ENCODE measurements at regions of chr1 and their contacts with region 1.

Region 1: GRCh38 chr1:171485375-171486047 is at the start of gene PRRC2C:
- DNase-seq: peak; percentile 80 to 95 (median 94)
- ATAC-seq: peak; percentile 93
- H3K4me3 ChIP-seq: peak within 1 kb of the TSS; percentile 93
- H3K4me3 Mint-ChIP-seq: peak within 1 kb of the TSS; percentile 83 to 99 (median 96)
- H3K27ac ChIP-seq: peak within 1 kb of the TSS; percentile 99
- H3K27ac Mint-ChIP-seq: peak within 1 kb of the TSS; percentile 92 to 100 (median 97)
- H3K4me1 ChIP-seq: peaks cover 34 to 46% of the 10 kb centered on the region in 2 donors
- H3K4me1 Mint-ChIP-seq: peaks cover 39 to 54% (median 49%) of the 10 kb centered on the region in 7 donors
- H3K27me3 ChIP-seq: no peaks in the 10 kb centered on the region
- H3K27me3 Mint-ChIP-seq: no peaks in the 10 kb centered on the region
- total RNA-seq, gene PRRC2C: 256 to 341 (median 293) TPM

Region 2: DNA sequence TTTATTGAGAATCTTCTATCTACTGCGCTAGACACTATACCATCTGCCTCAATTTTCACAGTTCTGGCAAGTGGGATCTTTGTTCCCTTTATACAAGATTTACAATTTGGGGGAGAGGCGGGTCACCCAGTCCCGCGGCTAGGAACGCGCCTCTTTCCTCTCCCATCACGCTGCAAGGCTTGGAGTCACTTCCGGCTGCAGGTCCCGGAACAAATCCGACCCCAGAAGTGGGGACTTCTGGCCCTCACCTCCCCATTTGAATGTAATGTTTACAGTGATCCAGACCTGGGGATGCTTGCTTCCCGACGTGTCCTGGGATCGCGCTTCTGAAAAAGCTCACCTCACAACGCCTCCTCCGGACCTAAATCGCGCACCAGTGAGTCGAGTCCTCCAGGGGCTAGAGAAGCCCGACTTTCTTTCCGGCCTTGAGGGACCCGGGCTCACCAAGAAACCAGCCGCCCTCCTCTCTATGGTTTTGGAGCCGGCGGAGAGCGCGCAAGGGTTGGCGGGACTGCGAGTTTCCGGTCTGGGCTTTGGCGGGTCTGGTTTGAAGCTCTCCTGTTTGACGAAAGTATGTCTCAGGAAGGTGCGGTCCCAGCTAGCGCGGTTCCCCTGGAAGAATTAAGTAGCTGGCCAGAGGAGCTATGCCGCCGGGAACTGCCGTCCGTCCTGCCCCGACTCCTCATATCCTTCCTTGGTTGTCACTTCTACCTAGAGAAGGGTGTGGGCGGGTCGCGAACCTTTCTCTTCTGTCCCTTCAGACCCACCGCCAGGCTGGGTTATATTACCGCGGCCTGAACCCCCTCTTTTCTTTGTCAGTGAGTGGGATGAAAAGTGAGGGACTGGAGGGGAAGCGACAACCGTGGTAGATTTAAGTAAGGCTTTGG is 1690.7 kb before region 1 on chr1 and contains the start of gene METTL18:
- CTCF ChIA-PET with region 1: no interaction called
- POLR2A ChIA-PET with region 1: no interaction called
- intact Hi-C with region 1: loop called in 1 of 2 experiments (anchors 1 kb)
- DNase-seq: peak; percentile 72 to 96 (median 92)
- ATAC-seq: peak; percentile 100
- H3K4me3 ChIP-seq: peak within 1 kb of the TSS; percentile 98
- H3K4me3 Mint-ChIP-seq: peak within 1 kb of the TSS; percentile 90 to 100 (median 100)
- H3K27ac ChIP-seq: peak within 1 kb of the TSS; percentile 94
- H3K27ac Mint-ChIP-seq: peak within 1 kb of the TSS; percentile 97 to 100 (median 99)
- H3K4me1 ChIP-seq: peaks cover 10 to 28% of the 10 kb centered on the region in 2 donors
- H3K4me1 Mint-ChIP-seq: peaks cover 26 to 60% (median 56%) of the 10 kb centered on the region in 7 donors
- H3K27me3 ChIP-seq: no peaks in the 10 kb centered on the region
- H3K27me3 Mint-ChIP-seq: no peaks in the 10 kb centered on the region
- total RNA-seq, gene METTL18: 4.9 to 21.1 (median 13.4) TPM

Region 3: GRCh38 chr1:171245458-171246064 is 239.9 kb before region 1 on chr1:
- CTCF ChIA-PET with region 1: no interaction called
- POLR2A ChIA-PET with region 1: no interaction called
- intact Hi-C with region 1: loop called in 1 of 2 experiments (anchors 5 kb)
- DNase-seq: peak in 4 of 9 donors; percentile 8 to 25 (median 15)
- ATAC-seq: peak; percentile 60
- H3K4me3 ChIP-seq: no peak overlapping the region
- H3K4me3 Mint-ChIP-seq: no peak overlapping the region
- H3K27ac ChIP-seq: no peak overlapping the region
- H3K27ac Mint-ChIP-seq: peak overlapping the region in 1 of 9 donors; percentile 28
- H3K4me1 ChIP-seq: no peaks in the 10 kb centered on the region
- H3K4me1 Mint-ChIP-seq: no peaks in the 10 kb centered on the region
- H3K27me3 ChIP-seq: peaks cover 0 to 4% of the 10 kb centered on the region in 2 donors
- H3K27me3 Mint-ChIP-seq: peaks cover 16 to 49% (median 31%) of the 10 kb centered on the region in 5 donors

Region 4: DNA sequence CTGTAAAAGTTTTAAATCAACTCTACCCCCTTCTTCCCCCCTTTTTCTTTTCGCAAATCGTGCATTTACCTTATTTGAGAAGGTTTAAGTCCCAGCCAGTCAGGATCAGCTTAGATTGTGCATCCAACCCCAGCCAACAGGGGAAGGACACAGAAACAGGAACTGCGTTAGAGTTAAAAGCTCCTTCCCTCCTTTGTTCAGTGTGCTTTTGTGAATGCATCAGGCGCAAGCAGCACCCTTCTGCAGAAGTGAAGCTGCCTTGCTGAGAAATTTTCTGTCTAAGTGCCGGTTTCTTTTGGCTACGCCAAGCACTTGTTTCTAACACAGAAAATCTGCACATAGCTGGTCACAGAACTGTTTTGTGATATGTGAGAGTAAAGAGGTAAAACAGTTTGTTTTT is 56.4 kb before region 1 on chr1:
- CTCF ChIA-PET with region 1: no interaction called
- POLR2A ChIA-PET with region 1: no interaction called
- intact Hi-C with region 1: no loop called
- DNase-seq: no peak
- ATAC-seq: no peak
- H3K4me3 ChIP-seq: no peak overlapping the region
- H3K4me3 Mint-ChIP-seq: no peak overlapping the region
- H3K27ac ChIP-seq: no peak overlapping the region
- H3K27ac Mint-ChIP-seq: no peak overlapping the region
- H3K4me1 ChIP-seq: no peaks in the 10 kb centered on the region
- H3K4me1 Mint-ChIP-seq: peaks cover 0 to 5% (median 4%) of the 10 kb centered on the region in 7 donors
- H3K27me3 ChIP-seq: no peaks in the 10 kb centered on the region
- H3K27me3 Mint-ChIP-seq: peaks cover 4 to 11% (median 6%) of the 10 kb centered on the region in 5 donors

Region 5: GRCh38 chr1:171457412-171457811 is 28.1 kb before region 1 on chr1:
- CTCF ChIA-PET with region 1: no interaction called
- POLR2A ChIA-PET with region 1: no interaction called
- intact Hi-C with region 1: no loop called
- DNase-seq: no peak
- ATAC-seq: no peak
- H3K4me3 ChIP-seq: no peak overlapping the region
- H3K4me3 Mint-ChIP-seq: no peak overlapping the region
- H3K27ac ChIP-seq: no peak overlapping the region
- H3K27ac Mint-ChIP-seq: no peak overlapping the region
- H3K4me1 ChIP-seq: no peaks in the 10 kb centered on the region
- H3K4me1 Mint-ChIP-seq: no peaks in the 10 kb centered on the region
- H3K27me3 ChIP-seq: no peaks in the 10 kb centered on the region
- H3K27me3 Mint-ChIP-seq: peaks cover 0 to 17% (median 4%) of the 10 kb centered on the region in 5 donors

Region 6: DNA sequence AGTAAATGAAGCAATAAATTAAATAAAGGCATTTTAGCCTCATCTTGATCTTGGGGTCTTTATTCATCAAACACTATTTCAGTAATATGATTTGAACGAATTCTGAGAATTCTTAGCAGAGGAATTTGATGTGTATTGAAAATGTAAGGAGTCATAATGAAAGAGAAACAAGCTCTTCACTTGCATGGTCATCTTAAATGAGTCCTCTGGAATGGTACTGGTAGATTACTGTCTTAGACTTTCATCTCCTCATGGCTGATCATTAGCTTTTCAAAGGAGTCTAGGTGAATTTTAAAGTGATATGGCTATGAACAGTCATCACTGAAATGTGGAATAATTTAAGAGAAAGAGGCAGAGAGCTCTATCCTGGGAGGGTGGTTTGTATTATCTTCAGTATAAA is 29.8 kb after region 1 on chr1:
- CTCF ChIA-PET with region 1: interaction called, 10 read pairs
- POLR2A ChIA-PET with region 1: interaction called, 6 read pairs
- intact Hi-C with region 1: loop called in 1 of 2 experiments (anchors 2 kb)
- DNase-seq: no peak
- ATAC-seq: no peak
- H3K4me3 ChIP-seq: no peak overlapping the region
- H3K4me3 Mint-ChIP-seq: no peak overlapping the region
- H3K27ac ChIP-seq: no peak overlapping the region
- H3K27ac Mint-ChIP-seq: peak overlapping the region in 6 of 9 donors; percentile 1 to 73 (median 48)
- H3K4me1 ChIP-seq: peaks cover 8 to 15% of the 10 kb centered on the region in 2 donors
- H3K4me1 Mint-ChIP-seq: peaks cover 22 to 55% (median 50%) of the 10 kb centered on the region in 7 donors
- H3K27me3 ChIP-seq: no peaks in the 10 kb centered on the region
- H3K27me3 Mint-ChIP-seq: no peaks in the 10 kb centered on the region

Region 7: GRCh38 chr1:171644805-171645483 is 159.4 kb after region 1 on chr1:
- CTCF ChIA-PET with region 1: no interaction called
- POLR2A ChIA-PET with region 1: no interaction called
- intact Hi-C with region 1: loop called in 1 of 2 experiments (anchors 1 kb)
- DNase-seq: peak; percentile 19 to 73 (median 62)
- ATAC-seq: peak; percentile 90
- H3K4me3 ChIP-seq: no peak overlapping the region
- H3K4me3 Mint-ChIP-seq: peak overlapping the region in 4 of 10 donors; percentile 2 to 27 (median 14)
- H3K27ac ChIP-seq: no peak overlapping the region
- H3K27ac Mint-ChIP-seq: peak overlapping the region in 3 of 9 donors; percentile 42 to 82 (median 77)
- H3K4me1 ChIP-seq: peaks cover 0 to 4% of the 10 kb centered on the region in 2 donors
- H3K4me1 Mint-ChIP-seq: peaks cover 4 to 12% (median 6%) of the 10 kb centered on the region in 7 donors
- H3K27me3 ChIP-seq: no peaks in the 10 kb centered on the region
- H3K27me3 Mint-ChIP-seq: peaks cover 0 to 9% (median 0%) of the 10 kb centered on the region in 5 donors

Region 8: DNA sequence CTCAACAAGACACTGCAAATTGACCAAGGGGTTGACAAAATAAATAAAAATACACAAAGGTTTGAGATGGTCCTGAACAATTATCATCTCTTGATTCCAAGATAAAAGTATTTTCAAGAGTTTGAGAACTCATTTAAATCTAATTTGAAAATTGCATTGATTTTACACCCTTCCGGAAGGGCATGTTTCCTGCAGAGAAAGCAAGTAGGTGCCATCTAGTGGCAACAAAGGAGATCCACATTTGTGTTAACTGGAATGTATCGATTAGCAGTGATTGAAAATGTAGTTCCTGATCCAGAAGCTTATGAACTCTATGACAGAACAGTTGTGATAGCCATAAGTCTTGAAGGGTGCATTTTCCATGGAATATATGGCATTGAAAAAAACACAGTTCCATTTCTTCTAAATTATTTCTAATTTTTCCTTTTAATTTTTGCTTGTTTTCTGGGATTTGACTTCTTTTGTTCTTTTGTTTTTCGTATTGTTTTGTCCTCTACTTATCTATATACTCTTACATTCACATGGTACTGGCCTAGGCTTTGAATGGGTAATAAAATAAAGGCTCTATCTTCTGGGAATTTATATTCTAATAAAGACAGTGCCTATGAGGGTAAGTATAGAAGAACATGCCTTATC is 499.5 kb after region 1 on chr1:
- CTCF ChIA-PET with region 1: no interaction called
- POLR2A ChIA-PET with region 1: no interaction called
- intact Hi-C with region 1: loop called in 1 of 2 experiments (anchors 1 kb)
- DNase-seq: peak in 7 of 9 donors; percentile 15 to 53 (median 39)
- ATAC-seq: peak; percentile 50
- H3K4me3 ChIP-seq: no peak overlapping the region
- H3K4me3 Mint-ChIP-seq: no peak overlapping the region
- H3K27ac ChIP-seq: no peak overlapping the region
- H3K27ac Mint-ChIP-seq: no peak overlapping the region
- H3K4me1 ChIP-seq: no peaks in the 10 kb centered on the region
- H3K4me1 Mint-ChIP-seq: peaks cover 0 to 3% (median 0%) of the 10 kb centered on the region in 7 donors
- H3K27me3 ChIP-seq: no peaks in the 10 kb centered on the region
- H3K27me3 Mint-ChIP-seq: peaks cover 0 to 17% (median 0%) of the 10 kb centered on the region in 5 donors

Measured in naive thymus-derived CD4-positive, alpha-beta T cell (primary cell).